T-cell (primary cell): ENCODE measurements at regions of chr5 and their contacts with region 1.

Region 1: DNA sequence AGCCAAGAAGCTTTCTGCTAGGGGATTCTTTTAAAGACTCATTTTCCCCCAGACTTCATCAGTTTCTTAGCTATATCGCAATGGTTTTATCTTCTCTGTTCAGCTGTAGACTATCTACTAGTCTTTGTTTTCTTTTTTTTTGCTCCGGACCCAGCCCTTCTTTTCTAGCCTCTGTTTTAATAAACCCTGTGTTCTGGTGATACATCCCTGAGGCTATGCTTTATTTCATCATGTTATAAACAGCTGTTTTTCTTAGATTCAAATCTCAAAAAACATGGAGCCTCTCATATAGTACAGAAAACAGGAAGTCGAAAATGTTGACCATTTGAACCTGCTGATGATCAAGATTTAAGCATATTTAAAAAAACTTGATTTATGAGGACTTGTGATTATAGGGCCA is 37.8 kb downstream of the SCGB3A1 start:
- DNase-seq: no peak
- ATAC-seq: no peak
- H3K4me3 ChIP-seq: no peak overlapping the region
- H3K4me3 Mint-ChIP-seq: no peak overlapping the region
- H3K27ac ChIP-seq: no peak overlapping the region
- H3K27ac Mint-ChIP-seq: peak overlapping the region; percentile 2
- H3K4me1 ChIP-seq: no peaks in the 10 kb centered on the region
- H3K4me1 Mint-ChIP-seq: peaks cover 4 to 13% (median 11%) of the 10 kb centered on the region in 3 donors
- H3K27me3 ChIP-seq: no peaks in the 10 kb centered on the region
- H3K27me3 Mint-ChIP-seq: no peaks in the 10 kb centered on the region

Region 2: DNA sequence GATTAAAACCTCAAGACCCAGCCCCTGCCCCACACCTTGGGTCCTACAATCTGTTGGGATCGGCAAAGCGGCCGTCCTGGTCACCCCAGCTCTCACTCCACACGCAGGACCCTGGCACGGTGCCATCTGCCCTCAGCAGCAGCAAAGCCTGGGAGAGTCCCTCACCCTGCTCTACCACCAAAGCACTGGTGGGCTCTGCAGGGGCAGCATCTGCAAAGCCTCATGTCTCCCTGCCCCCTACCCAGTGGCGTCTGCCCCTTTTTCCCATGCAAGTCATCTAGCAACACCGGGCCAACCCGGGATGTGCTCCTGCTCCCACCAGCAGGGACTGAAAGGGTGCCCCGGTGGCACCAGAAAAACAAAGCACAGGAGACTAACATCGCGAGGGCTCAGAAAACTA is 79.0 kb before region 1 on chr5:
- CTCF ChIA-PET with region 1: interaction called in 1 of 2 experiments, 11 read pairs
- POLR2A ChIA-PET with region 1: no interaction called
- DNase-seq: no peak
- ATAC-seq: no peak
- H3K4me3 ChIP-seq: no peak overlapping the region
- H3K4me3 Mint-ChIP-seq: no peak overlapping the region
- H3K27ac ChIP-seq: no peak overlapping the region
- H3K27ac Mint-ChIP-seq: no peak overlapping the region
- H3K4me1 ChIP-seq: peaks cover 0 to 10% of the 10 kb centered on the region in 2 experiments
- H3K4me1 Mint-ChIP-seq: peaks cover 0 to 5% (median 0%) of the 10 kb centered on the region in 3 donors
- H3K27me3 ChIP-seq: peaks cover 0 to 19% of the 10 kb centered on the region in 2 experiments
- H3K27me3 Mint-ChIP-seq: peaks cover 4 to 13% of the 10 kb centered on the region in 2 donors

Region 3: DNA sequence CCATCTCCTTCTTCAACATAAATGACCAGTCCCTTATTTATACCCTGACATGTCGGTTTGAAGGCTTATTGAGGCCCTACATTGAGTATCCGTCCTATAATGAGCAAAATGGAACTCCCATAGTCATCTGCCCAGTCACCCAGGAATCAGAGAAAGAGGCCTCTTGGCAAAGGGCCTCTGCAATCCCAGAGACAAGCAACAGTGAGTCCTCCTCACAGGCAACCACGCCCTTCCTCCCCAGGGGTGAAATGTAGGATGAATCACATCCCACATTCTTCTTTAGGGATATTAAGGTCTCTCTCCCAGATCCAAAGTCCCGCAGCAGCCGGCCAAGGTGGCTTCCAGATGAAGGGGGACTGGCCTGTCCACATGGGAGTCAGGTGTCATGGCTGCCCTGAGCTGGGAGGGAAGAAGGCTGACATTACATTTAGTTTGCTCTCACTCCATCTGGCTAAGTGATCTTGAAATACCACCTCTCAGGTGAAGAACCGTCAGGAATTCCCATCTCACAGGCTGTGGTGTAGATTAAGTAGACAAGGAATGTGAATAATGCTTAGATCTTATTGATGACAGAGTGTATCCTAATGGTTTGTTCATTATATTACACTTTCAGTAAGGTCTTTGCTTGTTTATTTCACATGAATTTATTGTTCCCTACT is 396.9 kb after region 1 on chr5:
- CTCF ChIA-PET with region 1: no interaction called
- POLR2A ChIA-PET with region 1: no interaction called
- DNase-seq: no peak
- ATAC-seq: no peak
- H3K4me3 ChIP-seq: no peak overlapping the region
- H3K4me3 Mint-ChIP-seq: no peak overlapping the region
- H3K27ac ChIP-seq: no peak overlapping the region
- H3K27ac Mint-ChIP-seq: no peak overlapping the region
- H3K4me1 ChIP-seq: no peaks in the 10 kb centered on the region
- H3K4me1 Mint-ChIP-seq: no peaks in the 10 kb centered on the region
- H3K27me3 ChIP-seq: peaks cover 0 to 7% of the 10 kb centered on the region in 2 experiments
- H3K27me3 Mint-ChIP-seq: peaks cover 3 to 8% of the 10 kb centered on the region in 2 donors